Naive thymus-derived CD4-positive, alpha-beta T cell (primary cell): ENCODE measurements at regions of chr1 and their contacts with region 1.

Region 1: GRCh38 chr1:207751790-207752455 is at the start of gene CD46:
- DNase-seq: peak; percentile 88 to 95 (median 90)
- ATAC-seq: peak; percentile 99
- H3K4me3 ChIP-seq: peak within 1 kb of the TSS; percentile 92
- H3K4me3 Mint-ChIP-seq: peak within 1 kb of the TSS; percentile 94 to 100 (median 99)
- H3K27ac ChIP-seq: peak within 1 kb of the TSS; percentile 90
- H3K27ac Mint-ChIP-seq: peak within 1 kb of the TSS; percentile 96 to 99 (median 97)
- H3K4me1 ChIP-seq: peaks cover 27 to 50% of the 10 kb centered on the region in 2 donors
- H3K4me1 Mint-ChIP-seq: peaks cover 49 to 93% (median 86%) of the 10 kb centered on the region in 7 donors
- H3K27me3 ChIP-seq: no peaks in the 10 kb centered on the region
- H3K27me3 Mint-ChIP-seq: peaks cover 0 to under 1% (median 0%) of the 10 kb centered on the region in 5 donors
- total RNA-seq, gene CD46: 121 to 216 (median 127) TPM

Region 2: GRCh38 chr1:206635080-206635977 is 1116.6 kb before region 1 on chr1 and contains the start of gene DYRK3:
- CTCF ChIA-PET with region 1: no interaction called
- POLR2A ChIA-PET with region 1: no interaction called
- intact Hi-C with region 1: loop called in 1 of 2 experiments (anchors 10 kb)
- DNase-seq: peak; percentile 71 to 98 (median 80)
- ATAC-seq: peak; percentile 97
- H3K4me3 ChIP-seq: peak within 1 kb of the TSS; percentile 67
- H3K4me3 Mint-ChIP-seq: peak within 1 kb of the TSS; percentile 85 to 96 (median 90)
- H3K27ac ChIP-seq: peak within 1 kb of the TSS; percentile 57
- H3K27ac Mint-ChIP-seq: peak within 1 kb of the TSS; percentile 64 to 93 (median 85)
- H3K4me1 ChIP-seq: peaks cover 8 to 16% of the 10 kb centered on the region in 2 donors
- H3K4me1 Mint-ChIP-seq: peaks cover 14 to 29% (median 18%) of the 10 kb centered on the region in 7 donors
- H3K27me3 ChIP-seq: no peaks in the 10 kb centered on the region
- H3K27me3 Mint-ChIP-seq: peaks cover 7 to 13% (median 9%) of the 10 kb centered on the region in 5 donors
- total RNA-seq, gene DYRK3: 0.22 to 8.2 (median 0.69) TPM

Region 3: GRCh38 chr1:207644852-207645634 is 106.9 kb before region 1 on chr1 and contains the start of gene CR1L:
- CTCF ChIA-PET with region 1: no interaction called
- POLR2A ChIA-PET with region 1: no interaction called
- intact Hi-C with region 1: loop called in 1 of 2 experiments (anchors 2 kb)
- DNase-seq: peak; percentile 54 to 82 (median 71)
- ATAC-seq: peak; percentile 99
- H3K4me3 ChIP-seq: peak within 1 kb of the TSS; percentile 66
- H3K4me3 Mint-ChIP-seq: peak within 1 kb of the TSS; percentile 68 to 88 (median 82)
- H3K27ac ChIP-seq: no peak within 1 kb of the TSS
- H3K27ac Mint-ChIP-seq: peak within 1 kb of the TSS in 1 of 9 donors; percentile 43
- H3K4me1 ChIP-seq: peaks cover 0 to 9% of the 10 kb centered on the region in 2 donors
- H3K4me1 Mint-ChIP-seq: peaks cover 0 to 13% (median 7%) of the 10 kb centered on the region in 7 donors
- H3K27me3 ChIP-seq: peaks cover 6 to 7% of the 10 kb centered on the region in 2 donors
- H3K27me3 Mint-ChIP-seq: peaks cover 13 to 61% (median 23%) of the 10 kb centered on the region in 5 donors
- total RNA-seq, gene CR1L: 0.42 to 0.53 TPM in 2 of 5 experiments, not detected in the others

Region 4: GRCh38 chr1:207868774-207869721 is 117.1 kb after region 1 on chr1:
- CTCF ChIA-PET with region 1: no interaction called
- POLR2A ChIA-PET with region 1: interaction called, 3 read pairs
- intact Hi-C with region 1: loop called (anchors 5 kb)
- DNase-seq: peak; percentile 57 to 86 (median 79)
- ATAC-seq: peak; percentile 79
- H3K4me3 ChIP-seq: peak overlapping the region; percentile 86
- H3K4me3 Mint-ChIP-seq: peak overlapping the region; percentile 74 to 99 (median 94)
- H3K27ac ChIP-seq: peak overlapping the region; percentile 78
- H3K27ac Mint-ChIP-seq: peak overlapping the region; percentile 91 to 98 (median 93)
- H3K4me1 ChIP-seq: peaks cover 39 to 80% of the 10 kb centered on the region in 2 donors
- H3K4me1 Mint-ChIP-seq: peaks cover 52 to 85% (median 77%) of the 10 kb centered on the region in 7 donors
- H3K27me3 ChIP-seq: no peaks in the 10 kb centered on the region
- H3K27me3 Mint-ChIP-seq: no peaks in the 10 kb centered on the region